ENCODE measurements at regions of chr13 and their contacts with region 1.

Region 1: GRCh38 chr13:97432917-97433726 is 847 bp upstream of the RAP2A start:
- DNase-seq: peak; percentile 93 to 100 (median 98)
- ATAC-seq: peak; percentile 78
- H3K4me3 ChIP-seq: peak overlapping the region; percentile 97
- H3K4me3 Mint-ChIP-seq: peak overlapping the region; percentile 99
- H3K27ac ChIP-seq: peak overlapping the region; percentile 99 to 100
- H3K27ac Mint-ChIP-seq: peak overlapping the region; percentile 99
- H3K4me1 ChIP-seq: peaks cover 13% of the 10 kb centered on the region
- H3K4me1 Mint-ChIP-seq: peaks cover 27% of the 10 kb centered on the region
- H3K27me3 ChIP-seq: no peaks in the 10 kb centered on the region
- H3K27me3 Mint-ChIP-seq: no peaks in the 10 kb centered on the region
- CTCF ChIP-seq: no peak

Region 2: DNA sequence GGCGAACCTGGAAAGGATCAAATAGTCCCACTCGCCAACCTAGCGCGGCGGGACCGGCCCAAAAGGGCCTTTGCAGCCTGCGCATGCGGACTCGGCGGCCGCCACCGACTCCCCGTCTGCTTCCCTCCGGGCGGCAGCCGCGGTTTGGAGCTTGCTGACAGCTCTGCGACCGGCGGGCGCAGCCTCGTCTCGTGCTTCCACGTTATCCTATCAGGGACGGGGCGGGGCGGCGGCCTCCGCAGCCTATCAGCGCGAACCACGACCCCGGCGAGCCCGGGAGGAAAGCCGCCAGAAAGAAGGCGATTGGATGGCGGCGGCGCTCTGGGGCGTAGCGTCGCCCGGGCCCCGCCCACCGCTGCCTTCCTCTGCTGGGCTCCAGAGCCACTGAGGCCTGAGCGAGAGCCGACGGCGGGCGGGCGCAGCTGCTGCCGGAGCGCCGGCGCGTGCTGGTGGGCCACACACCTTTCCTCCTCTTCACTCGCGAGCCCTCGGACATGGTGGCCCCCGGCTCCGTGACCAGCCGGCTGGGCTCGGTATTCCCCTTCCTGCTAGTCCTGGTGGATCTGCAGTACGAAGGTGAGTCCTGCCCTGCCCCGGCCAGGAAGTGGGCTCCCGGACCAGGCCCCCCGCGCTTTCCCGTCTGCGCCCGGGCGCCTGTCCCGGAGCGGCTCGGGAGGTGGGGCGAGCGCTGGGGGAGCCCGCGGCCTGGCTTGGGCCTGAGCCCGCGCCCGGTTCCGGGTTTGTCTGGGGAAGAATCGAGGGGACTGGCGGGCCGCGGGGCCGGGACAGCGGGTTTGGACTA is 1756.2 kb before region 1 on chr13 and contains the start of gene DNAJC3:
- CTCF ChIA-PET with region 1: interaction called, 4 read pairs
- POLR2A ChIA-PET with region 1: interaction called, 16 read pairs
- intact Hi-C with region 1: loop called (anchors 5 kb)
- DNase-seq: peak; percentile 95 to 99 (median 98)
- ATAC-seq: peak; percentile 94
- H3K4me3 ChIP-seq: peak within 1 kb of the TSS; percentile 92
- H3K4me3 Mint-ChIP-seq: peak within 1 kb of the TSS; percentile 91
- H3K27ac ChIP-seq: peak within 1 kb of the TSS; percentile 61 to 76
- H3K27ac Mint-ChIP-seq: peak within 1 kb of the TSS; percentile 89
- H3K4me1 ChIP-seq: peaks cover 21% of the 10 kb centered on the region
- H3K4me1 Mint-ChIP-seq: peaks cover 79% of the 10 kb centered on the region
- H3K27me3 ChIP-seq: no peaks in the 10 kb centered on the region
- H3K27me3 Mint-ChIP-seq: no peaks in the 10 kb centered on the region
- CTCF ChIP-seq: no peak
- total RNA-seq, gene DNAJC3: 17.6 to 17.7 TPM

Region 3: GRCh38 chr13:96810104-96810503 is 623.0 kb before region 1 on chr13:
- CTCF ChIA-PET with region 1: no interaction called
- POLR2A ChIA-PET with region 1: no interaction called
- intact Hi-C with region 1: no loop called
- DNase-seq: no peak
- ATAC-seq: no peak
- H3K4me3 ChIP-seq: no peak overlapping the region
- H3K4me3 Mint-ChIP-seq: no peak overlapping the region
- H3K27ac ChIP-seq: no peak overlapping the region
- H3K27ac Mint-ChIP-seq: no peak overlapping the region
- H3K4me1 ChIP-seq: no peaks in the 10 kb centered on the region
- H3K4me1 Mint-ChIP-seq: no peaks in the 10 kb centered on the region
- H3K27me3 ChIP-seq: no peaks in the 10 kb centered on the region
- H3K27me3 Mint-ChIP-seq: no peaks in the 10 kb centered on the region
- CTCF ChIP-seq: no peak

Region 4: GRCh38 chr13:97221989-97222700 is 211.0 kb before region 1 on chr13 and contains the start of gene MBNL2:
- CTCF ChIA-PET with region 1: no interaction called
- POLR2A ChIA-PET with region 1: interaction called, 91 read pairs
- intact Hi-C with region 1: loop called (anchors 5 to 10 kb)
- DNase-seq: peak; percentile 73 to 94 (median 80)
- ATAC-seq: peak; percentile 95
- H3K4me3 ChIP-seq: peak within 1 kb of the TSS; percentile 58
- H3K4me3 Mint-ChIP-seq: peak within 1 kb of the TSS; percentile 91
- H3K27ac ChIP-seq: peak within 1 kb of the TSS; percentile 77 to 81
- H3K27ac Mint-ChIP-seq: peak within 1 kb of the TSS; percentile 89
- H3K4me1 ChIP-seq: peaks cover 32% of the 10 kb centered on the region
- H3K4me1 Mint-ChIP-seq: peaks cover 40% of the 10 kb centered on the region
- H3K27me3 ChIP-seq: no peaks in the 10 kb centered on the region
- H3K27me3 Mint-ChIP-seq: no peaks in the 10 kb centered on the region
- CTCF ChIP-seq: no peak
- total RNA-seq, gene MBNL2: 35.9 to 36.0 TPM

Region 5: DNA sequence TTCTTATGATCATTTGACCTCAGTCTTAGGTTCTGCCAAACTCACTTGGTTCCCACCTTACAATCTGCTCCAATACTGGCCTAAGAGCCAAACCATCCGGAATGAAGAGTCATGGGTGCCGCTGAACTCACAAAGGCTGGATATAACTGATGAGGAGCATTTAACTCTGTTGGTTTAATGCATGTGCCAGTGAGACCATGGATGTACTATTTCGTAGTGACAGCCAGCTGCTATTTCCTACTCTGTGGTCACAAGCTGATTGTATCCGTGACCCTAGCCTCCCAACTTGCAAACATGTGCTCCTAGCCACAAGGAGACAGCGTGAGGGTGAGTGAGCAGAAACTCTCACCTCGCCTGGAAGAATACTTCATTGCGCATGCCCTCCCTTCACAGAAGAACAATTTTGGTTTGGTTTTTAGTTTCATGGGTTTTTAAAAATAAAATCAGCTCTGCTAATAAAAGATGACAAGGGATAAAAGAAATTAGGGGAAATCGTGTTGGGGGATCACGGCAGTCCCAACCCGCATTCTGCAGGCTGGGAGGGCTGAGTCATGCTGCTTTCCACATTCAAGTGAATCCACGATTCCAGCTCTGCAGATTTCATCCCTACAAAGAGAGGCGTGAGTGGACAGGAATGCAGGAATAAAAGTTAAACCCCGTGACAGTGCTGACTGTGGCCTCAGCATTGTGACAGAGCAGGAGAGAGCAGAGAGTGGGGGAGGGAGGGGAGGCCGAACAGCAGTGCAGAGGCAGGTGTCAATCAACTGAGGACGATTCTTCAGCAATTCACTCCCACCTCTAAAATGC is 65.9 kb before region 1 on chr13:
- CTCF ChIA-PET with region 1: no interaction called
- POLR2A ChIA-PET with region 1: interaction called, 19 read pairs
- intact Hi-C with region 1: no loop called
- DNase-seq: no peak
- ATAC-seq: no peak
- H3K4me3 ChIP-seq: no peak overlapping the region
- H3K4me3 Mint-ChIP-seq: peak overlapping the region; percentile 1
- H3K27ac ChIP-seq: no peak overlapping the region
- H3K27ac Mint-ChIP-seq: peak overlapping the region; percentile 28
- H3K4me1 ChIP-seq: no peaks in the 10 kb centered on the region
- H3K4me1 Mint-ChIP-seq: peaks cover 28% of the 10 kb centered on the region
- H3K27me3 ChIP-seq: no peaks in the 10 kb centered on the region
- H3K27me3 Mint-ChIP-seq: no peaks in the 10 kb centered on the region
- CTCF ChIP-seq: no peak

Region 6: DNA sequence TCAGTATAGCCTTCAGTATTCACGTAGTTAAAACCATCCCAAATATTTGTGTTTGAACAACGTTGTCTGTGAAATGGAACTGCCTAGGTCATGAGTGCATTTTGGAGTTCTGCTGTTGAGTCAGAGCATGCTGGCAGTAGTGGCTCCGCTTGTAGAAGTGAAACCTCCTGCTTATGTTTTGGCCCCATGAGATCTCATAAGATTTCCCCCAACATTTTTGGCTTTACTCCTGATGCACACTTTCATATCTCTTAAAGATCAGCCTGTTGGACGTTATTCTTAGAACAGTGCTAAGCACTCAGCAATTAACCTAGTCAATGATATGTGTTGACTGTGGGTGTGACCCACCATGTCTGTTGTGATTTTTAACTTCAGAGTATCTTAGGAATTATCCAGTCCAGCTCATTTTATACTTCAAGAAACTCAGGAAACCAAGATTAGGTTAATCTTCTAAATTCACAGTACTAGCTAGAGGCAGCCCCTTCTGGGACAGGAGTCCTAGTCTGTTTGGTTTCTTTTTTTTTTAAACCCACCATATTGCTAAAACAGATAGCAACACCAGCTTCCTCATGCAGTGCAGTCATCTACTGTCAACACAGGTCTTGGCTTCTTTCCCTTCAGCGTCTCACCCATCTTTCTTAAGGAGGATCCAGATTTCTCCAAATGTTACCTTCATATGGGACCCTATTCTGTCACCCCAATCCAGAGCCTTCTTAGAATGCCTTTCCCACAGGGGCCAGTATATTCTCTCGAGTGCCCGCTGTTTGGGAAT is 27.1 kb after region 1 on chr13:
- CTCF ChIA-PET with region 1: interaction called, 3 read pairs
- POLR2A ChIA-PET with region 1: interaction called, 13 read pairs
- intact Hi-C with region 1: no loop called
- DNase-seq: peak in 2 of 14 experiments; percentile 9 to 10
- ATAC-seq: peak; percentile 37
- H3K4me3 ChIP-seq: no peak overlapping the region
- H3K4me3 Mint-ChIP-seq: no peak overlapping the region
- H3K27ac ChIP-seq: no peak overlapping the region
- H3K27ac Mint-ChIP-seq: peak overlapping the region; percentile 21
- H3K4me1 ChIP-seq: peaks cover 4% of the 10 kb centered on the region
- H3K4me1 Mint-ChIP-seq: peaks cover 44% of the 10 kb centered on the region
- H3K27me3 ChIP-seq: no peaks in the 10 kb centered on the region
- H3K27me3 Mint-ChIP-seq: no peaks in the 10 kb centered on the region
- CTCF ChIP-seq: no peak

Measured in CD4-positive, alpha-beta T cell (primary cell).